B cell (primary cell): ENCODE measurements at regions of chr20 and their contacts with region 1.

Region 1: DNA sequence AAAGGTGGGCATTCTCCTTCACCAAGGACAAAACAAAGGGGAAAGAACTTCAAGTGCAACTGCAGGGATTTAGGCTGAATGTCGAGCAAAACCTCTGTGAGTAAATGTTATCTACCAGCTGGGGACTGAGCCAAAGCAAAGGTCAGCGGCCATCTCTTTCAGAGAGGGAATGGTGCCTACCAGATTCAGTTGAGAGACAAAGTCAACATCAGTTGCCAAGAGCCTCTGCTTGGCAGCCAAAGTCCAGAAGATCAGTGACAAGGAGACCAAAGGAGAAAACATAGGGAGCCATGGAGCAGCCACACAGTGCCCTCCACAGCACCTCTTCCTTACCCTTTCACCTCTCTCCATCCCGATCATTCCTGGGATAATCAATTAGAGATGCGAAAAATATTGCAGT is 472.5 kb downstream of the KIF16B start:
- DNase-seq: no peak
- ATAC-seq: no peak
- H3K4me3 ChIP-seq: no peak overlapping the region
- H3K4me3 Mint-ChIP-seq: no peak overlapping the region
- H3K27ac ChIP-seq: no peak overlapping the region
- H3K27ac Mint-ChIP-seq: peak overlapping the region; percentile 73
- H3K4me1 ChIP-seq: peaks cover 31 to 32% of the 10 kb centered on the region in 2 donors
- H3K4me1 Mint-ChIP-seq: peaks cover 54% of the 10 kb centered on the region
- H3K27me3 ChIP-seq: no peaks in the 10 kb centered on the region
- H3K27me3 Mint-ChIP-seq: no peaks in the 10 kb centered on the region
- CTCF ChIP-seq: no peak

Region 2: GRCh38 chr20:16083639-16084280 is 17.0 kb before region 1 on chr20:
- CTCF ChIA-PET with region 1: interaction called, 3 read pairs
- POLR2A ChIA-PET with region 1: no interaction called
- intact Hi-C with region 1: loop called (anchors 2 kb)
- DNase-seq: peak; percentile 24
- ATAC-seq: peak; percentile 17
- H3K4me3 ChIP-seq: peak overlapping the region in 2 of 5 experiments; percentile 16 to 25
- H3K4me3 Mint-ChIP-seq: peak overlapping the region; percentile 10
- H3K27ac ChIP-seq: peak overlapping the region; percentile 9 to 71
- H3K27ac Mint-ChIP-seq: peak overlapping the region; percentile 47
- H3K4me1 ChIP-seq: peaks cover 37 to 59% of the 10 kb centered on the region in 2 donors
- H3K4me1 Mint-ChIP-seq: peaks cover 48% of the 10 kb centered on the region
- H3K27me3 ChIP-seq: no peaks in the 10 kb centered on the region
- H3K27me3 Mint-ChIP-seq: no peaks in the 10 kb centered on the region
- CTCF ChIP-seq: no peak